Heart right ventricle (tissue), 16 donors: ENCODE measurements at regions of chr10 and their contacts with region 1.

Region 1: DNA sequence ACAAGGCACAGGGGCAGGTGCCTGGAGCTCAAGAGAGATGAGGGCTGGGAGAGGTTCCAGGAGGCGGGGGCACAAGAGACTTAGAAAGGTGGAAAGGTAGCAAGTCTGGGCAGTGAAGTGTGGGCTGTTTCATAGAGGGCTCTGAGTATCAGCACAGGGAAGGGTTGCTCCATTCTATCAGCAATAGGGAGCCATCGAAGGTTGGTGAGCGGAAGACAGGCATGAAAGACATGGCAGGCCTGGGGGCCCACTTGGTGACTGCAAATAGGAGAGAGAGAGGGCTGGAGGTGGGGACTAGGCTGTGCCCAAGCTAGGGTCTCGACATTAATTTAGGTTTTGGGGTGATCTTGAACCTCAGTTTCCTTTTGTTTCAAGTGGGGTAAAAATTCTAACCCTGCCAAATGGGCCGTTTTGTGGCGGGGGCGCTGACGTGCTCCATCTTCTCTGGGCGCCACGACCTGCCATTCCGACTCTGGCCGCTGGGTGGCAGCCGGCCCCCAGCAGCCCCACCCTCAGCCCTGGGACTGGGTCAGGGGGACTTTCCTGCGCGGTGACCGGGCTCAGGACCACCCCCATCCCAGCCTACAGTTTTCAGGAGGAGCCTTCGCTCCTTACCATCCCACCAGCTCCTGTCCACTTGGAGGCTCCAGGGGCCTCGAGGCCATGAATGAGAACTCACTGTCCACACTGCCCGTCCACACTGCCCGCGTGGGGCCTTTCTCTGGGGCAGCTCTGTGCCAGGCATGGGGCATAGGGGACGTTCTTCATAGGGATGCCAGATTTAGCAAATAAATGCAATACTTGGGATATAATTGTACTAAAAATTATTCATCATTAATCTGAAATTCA is 37.2 kb upstream of the PCBD1 start:
- DNase-seq: peak; percentile 32 to 62
- ATAC-seq: peak; percentile 65 to 87 (median 83)
- H3K4me3 ChIP-seq: no peak overlapping the region
- H3K27ac ChIP-seq: peak overlapping the region in 1 of 10 donors; percentile 55
- H3K4me1 ChIP-seq: peaks cover 0 to 13% (median 4%) of the 10 kb centered on the region in 9 donors
- H3K27me3 ChIP-seq: peaks cover 0 to 10% (median 0%) of the 10 kb centered on the region in 7 donors
- CTCF ChIP-seq: peak; percentile 83 to 99 (median 94)

Region 2: GRCh38 chr10:70902661-70903261 is 22.8 kb before region 1 on chr10:
- intact Hi-C with region 1: no loop called
- DNase-seq: no peak
- ATAC-seq: peak in 1 of 8 donors; percentile 4
- H3K4me3 ChIP-seq: peak overlapping the region in 1 of 10 donors; percentile 10
- H3K27ac ChIP-seq: no peak overlapping the region
- H3K4me1 ChIP-seq: peaks cover 0 to 20% (median 9%) of the 10 kb centered on the region in 9 donors
- H3K27me3 ChIP-seq: peaks cover 0 to 5% (median 0%) of the 10 kb centered on the region in 7 donors
- CTCF ChIP-seq: no peak

Region 3: DNA sequence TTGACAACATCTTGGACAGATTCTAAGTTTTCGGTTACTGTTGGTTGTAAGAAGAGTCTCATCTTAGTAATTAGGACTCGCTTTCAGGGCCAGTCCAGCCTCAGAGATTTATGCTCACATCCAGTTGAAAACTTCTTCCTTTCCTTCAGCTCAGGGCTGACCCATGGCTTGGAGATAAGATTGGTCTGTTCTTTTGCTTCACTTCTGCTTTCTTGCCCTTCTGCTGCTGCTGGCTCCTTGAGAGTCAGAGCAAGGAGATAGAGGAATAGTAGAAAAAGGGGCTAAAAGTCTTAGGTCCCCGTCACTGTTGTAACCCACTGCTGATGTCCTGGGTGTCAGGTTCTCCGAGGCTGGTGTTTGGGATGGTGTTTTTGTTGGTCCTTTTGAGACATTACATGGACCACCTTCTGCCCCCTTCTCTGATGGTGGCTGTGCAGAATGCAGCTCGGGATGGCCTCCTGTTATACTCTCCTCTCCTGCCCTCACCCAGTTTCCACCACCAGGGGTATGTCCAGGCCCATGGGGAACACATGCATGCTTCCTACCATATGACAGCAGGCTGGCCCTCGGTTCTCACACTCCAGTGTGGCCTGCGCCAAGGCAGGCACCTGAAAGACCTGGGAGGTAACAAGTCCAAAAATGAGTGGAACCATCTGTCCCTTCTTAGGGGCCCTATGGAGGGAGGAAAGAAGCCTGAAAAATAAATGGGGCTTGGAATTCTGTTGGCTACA is 30.6 kb after region 1 on chr10:
- intact Hi-C with region 1: no loop called
- DNase-seq: no peak
- ATAC-seq: peak in 1 of 8 donors; percentile 28
- H3K4me3 ChIP-seq: no peak overlapping the region
- H3K27ac ChIP-seq: no peak overlapping the region
- H3K4me1 ChIP-seq: no peaks in the 10 kb centered on the region
- H3K27me3 ChIP-seq: peaks cover 0 to 7% (median 0%) of the 10 kb centered on the region in 7 donors
- CTCF ChIP-seq: peak in 2 of 9 donors; percentile 6 to 8

Region 4: GRCh38 chr10:71068861-71069271 is 143.3 kb after region 1 on chr10:
- intact Hi-C with region 1: loop called in 3 of 10 experiments (anchors 5 to 10 kb)
- DNase-seq: peak; percentile 64 to 67
- ATAC-seq: peak; percentile 69 to 86 (median 78)
- H3K4me3 ChIP-seq: no peak overlapping the region
- H3K27ac ChIP-seq: peak overlapping the region; percentile 29 to 84 (median 79)
- H3K4me1 ChIP-seq: peaks cover 0 to 52% (median 18%) of the 10 kb centered on the region in 9 donors
- H3K27me3 ChIP-seq: peaks cover 0 to 3% (median 0%) of the 10 kb centered on the region in 7 donors
- CTCF ChIP-seq: no peak

Region 5: GRCh38 chr10:71124921-71125748 is 199.5 kb after region 1 on chr10:
- intact Hi-C with region 1: loop called in 1 of 10 experiments (anchors 1 kb)
- DNase-seq: peak; percentile 26 to 29
- ATAC-seq: peak; percentile 33 to 96 (median 78)
- H3K4me3 ChIP-seq: no peak overlapping the region
- H3K27ac ChIP-seq: no peak overlapping the region
- H3K4me1 ChIP-seq: peaks cover 0 to 14% (median 4%) of the 10 kb centered on the region in 9 donors
- H3K27me3 ChIP-seq: peaks cover 0 to 5% (median 0%) of the 10 kb centered on the region in 7 donors
- CTCF ChIP-seq: peak in 2 of 9 donors; percentile 16 to 35